AG04449 (cell line): ENCODE measurements at regions of chr16 and their contacts with region 1.

Region 1: DNA sequence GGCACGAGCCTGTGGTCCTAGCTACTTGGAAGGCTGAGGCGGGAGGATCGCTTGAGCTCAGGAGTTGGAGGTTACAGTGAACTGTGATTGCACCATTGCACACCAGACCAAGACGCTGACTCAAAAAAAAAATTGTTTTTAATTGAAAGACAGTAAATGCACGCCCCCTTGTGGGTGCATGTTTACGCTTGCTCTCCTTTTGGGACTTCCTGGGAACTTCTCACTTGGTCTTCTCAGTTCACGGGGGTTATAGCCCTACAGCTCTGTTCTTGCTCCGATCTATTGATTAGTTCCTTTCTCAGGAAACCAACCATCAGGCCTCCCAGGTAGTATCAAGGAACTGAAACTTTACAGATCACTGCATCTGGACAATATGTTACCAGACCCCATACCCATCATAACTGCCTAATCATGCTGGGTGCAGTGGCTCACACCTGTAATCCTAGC is 14.2 kb upstream of the RIPOR1 start:
- DNase-seq: peak; percentile 42
- H3K4me3 ChIP-seq: no peak overlapping the region
- CTCF ChIP-seq: peak; percentile 56

Region 2: GRCh38 chr16:67393035-67393787 is 121.2 kb before region 1 on chr16 and contains the start of gene TPPP3:
- CTCF ChIA-PET with region 1: no interaction called
- POLR2A ChIA-PET with region 1: no interaction called
- DNase-seq: no peak
- H3K4me3 ChIP-seq: peak within 1 kb of the TSS; percentile 42
- CTCF ChIP-seq: peak; percentile 72

Region 3: DNA sequence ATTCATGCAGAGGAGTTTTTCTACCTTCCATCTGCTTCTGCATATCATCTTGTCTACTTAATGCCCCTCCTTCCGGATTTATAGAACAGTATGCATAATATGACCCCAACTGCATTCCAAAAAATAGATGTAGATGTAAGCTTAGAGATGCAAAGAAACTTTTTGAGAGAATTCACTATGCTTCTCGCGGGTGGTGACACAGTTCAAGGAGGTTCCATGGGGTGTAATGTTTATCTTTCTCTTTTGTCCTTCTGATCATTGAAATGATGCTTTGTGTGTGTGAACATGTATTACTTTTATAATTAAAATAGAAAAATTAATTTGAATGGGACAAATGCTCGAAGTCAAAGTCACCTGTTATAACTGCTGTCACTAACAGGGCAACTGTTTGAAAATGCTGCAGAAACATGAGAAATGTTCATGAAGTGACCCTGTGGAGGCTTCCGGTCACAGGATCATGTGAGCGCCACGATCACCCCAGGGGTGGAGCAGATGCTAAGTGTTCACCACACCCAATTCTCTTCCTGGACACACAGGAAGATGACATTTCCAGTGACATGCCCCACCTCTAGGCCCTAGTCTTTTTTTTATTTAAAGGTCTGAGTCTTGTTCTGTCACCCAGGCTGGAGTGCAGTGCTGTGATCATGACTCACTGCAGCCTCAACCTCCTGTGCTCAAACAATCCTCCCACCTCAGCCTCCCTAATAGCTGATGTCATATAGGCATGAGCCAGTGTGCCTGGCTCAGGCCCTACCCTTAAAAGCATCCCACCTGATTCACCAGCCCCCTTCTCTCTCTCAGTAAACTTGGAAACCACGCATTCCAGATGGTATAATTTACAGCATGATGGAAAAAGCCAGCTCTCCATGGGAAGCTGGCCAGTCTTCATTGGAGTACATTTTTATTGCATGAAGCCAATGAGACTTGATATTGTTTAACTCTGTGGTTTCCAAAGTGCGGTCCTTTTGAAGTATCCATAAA is 10.1 kb before region 1 on chr16:
- CTCF ChIA-PET with region 1: interaction called, 661 read pairs
- POLR2A ChIA-PET with region 1: no interaction called
- DNase-seq: no peak
- H3K4me3 ChIP-seq: no peak overlapping the region
- CTCF ChIP-seq: no peak

Region 4: DNA sequence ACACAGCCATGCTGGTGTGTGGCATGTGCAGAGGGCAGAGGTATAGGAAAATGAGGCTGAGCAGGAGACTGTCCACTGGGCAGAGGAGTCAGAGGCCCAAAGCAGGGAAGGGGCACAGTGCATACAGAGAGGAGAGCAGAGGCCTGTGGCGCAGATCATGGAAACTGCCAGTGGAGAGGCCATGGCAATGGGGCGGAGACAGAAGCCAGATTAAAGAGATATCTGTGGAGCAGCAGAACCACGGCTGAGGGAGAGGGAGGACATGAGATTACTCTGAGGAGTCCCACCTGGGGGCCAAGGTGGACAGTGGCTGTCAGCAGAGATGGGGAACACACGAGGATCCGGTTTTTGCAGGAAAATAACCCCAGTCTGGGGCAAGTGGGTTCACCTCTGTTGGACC is 248.7 kb after region 1 on chr16:
- CTCF ChIA-PET with region 1: no interaction called
- POLR2A ChIA-PET with region 1: no interaction called
- DNase-seq: no peak
- H3K4me3 ChIP-seq: no peak overlapping the region
- CTCF ChIP-seq: no peak